ENCODE measurements at regions of chr3 and their contacts with region 1.

Region 1: GRCh38 chr3:156674046-156674910 is at the start of gene TIPARP:
- DNase-seq: peak; percentile 97
- H3K4me3 Mint-ChIP-seq: peak within 1 kb of the TSS; percentile 79
- H3K27ac Mint-ChIP-seq: peak within 1 kb of the TSS; percentile 89
- H3K4me1 Mint-ChIP-seq: peaks cover 20% of the 10 kb centered on the region
- H3K27me3 Mint-ChIP-seq: no peaks in the 10 kb centered on the region
- CTCF ChIP-seq: peak; percentile 40
- total RNA-seq, gene TIPARP: 41.6 and 50.0 TPM in 2 replicates

Region 2: DNA sequence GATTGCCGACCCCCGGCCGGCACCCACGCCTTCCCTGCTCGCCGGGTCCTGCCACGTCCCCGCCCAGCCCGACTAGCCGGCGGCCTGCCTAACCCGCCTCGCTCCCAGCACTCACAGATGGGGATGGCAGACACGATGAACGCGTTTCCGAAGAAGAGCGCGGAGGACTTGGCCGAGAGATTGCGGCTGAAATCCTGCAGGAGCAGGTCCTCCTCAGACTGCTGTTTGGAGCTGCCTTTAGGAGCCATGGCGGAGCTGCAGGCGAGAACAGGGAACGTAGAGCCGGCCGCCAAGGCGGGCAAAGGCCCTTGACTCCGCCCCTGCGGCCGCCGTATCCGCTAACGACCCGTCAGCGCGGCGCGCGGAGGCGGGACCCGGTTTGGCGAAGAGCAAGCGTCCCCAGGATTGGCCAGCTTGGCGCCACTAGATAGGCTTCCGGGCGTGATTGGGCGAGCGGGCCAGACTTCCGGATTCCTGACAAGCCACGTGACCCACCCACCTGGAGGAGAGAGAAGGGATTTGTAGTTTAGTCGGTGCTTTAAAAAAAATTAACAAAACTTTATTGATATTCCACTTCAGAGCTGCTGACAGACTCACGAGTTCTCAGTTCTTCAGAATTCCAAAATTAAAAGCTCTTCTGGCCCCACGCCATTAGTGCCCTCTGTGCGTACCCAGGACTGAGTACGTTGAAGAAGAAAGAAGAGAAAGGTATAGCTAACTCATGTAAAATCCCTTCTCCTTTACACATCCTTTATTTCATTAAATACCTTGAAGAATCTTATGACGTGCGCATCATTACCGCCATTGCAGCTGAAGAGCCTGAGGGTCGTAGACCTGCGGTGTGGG is 119.2 kb before region 1 on chr3 and contains the start of gene SSR3:
- CTCF ChIA-PET with region 1: interaction called, 20 read pairs
- POLR2A ChIA-PET with region 1: interaction called, 157 read pairs
- intact Hi-C with region 1: loop called (anchors 1 kb)
- DNase-seq: peak; percentile 99
- H3K4me3 Mint-ChIP-seq: peak within 1 kb of the TSS; percentile 89
- H3K27ac Mint-ChIP-seq: peak within 1 kb of the TSS; percentile 92
- H3K4me1 Mint-ChIP-seq: peaks cover 30% of the 10 kb centered on the region
- H3K27me3 Mint-ChIP-seq: no peaks in the 10 kb centered on the region
- CTCF ChIP-seq: peak; percentile 8
- total RNA-seq, gene SSR3: 447 and 568 TPM in 2 replicates

Region 3: DNA sequence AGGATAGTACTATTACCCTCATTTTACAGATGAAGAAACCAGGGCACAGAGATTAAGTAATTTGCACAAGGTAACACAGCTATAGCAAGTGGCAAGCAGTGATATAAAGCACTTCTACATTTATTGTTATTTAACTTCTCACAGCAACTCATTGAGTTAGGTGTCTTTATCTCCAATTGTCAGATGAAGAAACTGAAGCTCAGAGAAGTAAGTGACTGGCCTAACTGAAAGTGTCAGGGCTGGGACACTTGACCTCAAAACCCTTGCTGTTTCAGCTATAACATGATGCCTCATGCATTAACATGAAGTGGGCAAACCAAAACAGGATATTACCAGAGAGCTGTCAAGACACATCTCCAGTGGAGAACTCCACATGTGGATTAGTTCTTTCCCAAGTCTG is 86.1 kb after region 1 on chr3:
- CTCF ChIA-PET with region 1: interaction called, 5 read pairs
- POLR2A ChIA-PET with region 1: interaction called, 20 read pairs
- intact Hi-C with region 1: no loop called
- DNase-seq: no peak
- H3K4me3 Mint-ChIP-seq: no peak overlapping the region
- H3K27ac Mint-ChIP-seq: no peak overlapping the region
- H3K4me1 Mint-ChIP-seq: peaks cover 21% of the 10 kb centered on the region
- H3K27me3 Mint-ChIP-seq: no peaks in the 10 kb centered on the region
- CTCF ChIP-seq: no peak

Region 4: DNA sequence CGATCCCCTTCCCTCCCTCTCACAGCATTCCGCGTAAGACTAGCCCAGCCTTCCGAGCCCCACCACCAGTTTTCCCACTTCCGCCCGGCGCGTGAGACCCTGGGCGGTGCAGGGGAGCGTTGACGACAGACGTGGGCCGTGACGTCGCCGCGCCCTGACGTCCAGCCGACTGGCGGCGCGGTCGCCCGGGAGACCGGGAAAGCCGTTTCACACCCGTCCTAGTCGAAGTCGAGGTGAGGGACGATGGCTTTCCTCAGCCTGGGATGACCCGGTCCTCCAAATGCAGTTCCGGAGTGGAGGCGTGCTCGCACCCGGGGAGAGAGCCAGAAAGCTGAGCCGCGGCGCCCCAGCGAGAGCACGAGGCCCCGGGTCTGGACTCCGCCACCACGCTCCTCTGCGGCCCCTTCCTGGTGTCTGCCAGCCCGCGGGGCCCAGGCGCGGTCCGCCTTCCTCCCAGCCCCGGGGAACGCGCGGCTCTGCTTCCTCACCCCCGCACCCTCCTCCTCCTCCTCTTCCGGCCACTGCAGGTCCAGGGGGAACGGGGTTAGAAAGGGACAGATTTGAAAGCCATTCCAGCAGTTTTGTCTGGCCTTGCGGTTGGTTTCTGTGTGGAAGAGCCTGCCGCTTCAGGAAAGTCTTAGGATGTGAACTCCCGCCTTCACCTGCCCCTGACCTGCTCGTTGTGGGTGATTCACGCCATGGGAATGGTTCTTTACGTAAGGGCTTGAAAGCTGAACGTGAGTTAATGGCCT is 152.0 kb after region 1 on chr3 and contains the start of gene LEKR1:
- CTCF ChIA-PET with region 1: interaction called, 3 read pairs
- POLR2A ChIA-PET with region 1: interaction called, 103 read pairs
- intact Hi-C with region 1: loop called (anchors 1 kb)
- DNase-seq: peak; percentile 88
- H3K4me3 Mint-ChIP-seq: peak within 1 kb of the TSS; percentile 94
- H3K27ac Mint-ChIP-seq: peak within 1 kb of the TSS; percentile 98
- H3K4me1 Mint-ChIP-seq: no peaks in the 10 kb centered on the region
- H3K27me3 Mint-ChIP-seq: no peaks in the 10 kb centered on the region
- CTCF ChIP-seq: no peak
- total RNA-seq, gene LEKR1: 1.3 and 2.2 TPM in 2 replicates

Region 5: GRCh38 chr3:157104928-157105652 is 430.8 kb after region 1 on chr3:
- CTCF ChIA-PET with region 1: no interaction called
- POLR2A ChIA-PET with region 1: interaction called, 11 read pairs
- intact Hi-C with region 1: no loop called
- DNase-seq: no peak
- H3K4me3 Mint-ChIP-seq: no peak overlapping the region
- H3K27ac Mint-ChIP-seq: peak overlapping the region; percentile 10
- H3K4me1 Mint-ChIP-seq: peaks cover 18% of the 10 kb centered on the region
- H3K27me3 Mint-ChIP-seq: no peaks in the 10 kb centered on the region
- CTCF ChIP-seq: no peak

Region 6: DNA sequence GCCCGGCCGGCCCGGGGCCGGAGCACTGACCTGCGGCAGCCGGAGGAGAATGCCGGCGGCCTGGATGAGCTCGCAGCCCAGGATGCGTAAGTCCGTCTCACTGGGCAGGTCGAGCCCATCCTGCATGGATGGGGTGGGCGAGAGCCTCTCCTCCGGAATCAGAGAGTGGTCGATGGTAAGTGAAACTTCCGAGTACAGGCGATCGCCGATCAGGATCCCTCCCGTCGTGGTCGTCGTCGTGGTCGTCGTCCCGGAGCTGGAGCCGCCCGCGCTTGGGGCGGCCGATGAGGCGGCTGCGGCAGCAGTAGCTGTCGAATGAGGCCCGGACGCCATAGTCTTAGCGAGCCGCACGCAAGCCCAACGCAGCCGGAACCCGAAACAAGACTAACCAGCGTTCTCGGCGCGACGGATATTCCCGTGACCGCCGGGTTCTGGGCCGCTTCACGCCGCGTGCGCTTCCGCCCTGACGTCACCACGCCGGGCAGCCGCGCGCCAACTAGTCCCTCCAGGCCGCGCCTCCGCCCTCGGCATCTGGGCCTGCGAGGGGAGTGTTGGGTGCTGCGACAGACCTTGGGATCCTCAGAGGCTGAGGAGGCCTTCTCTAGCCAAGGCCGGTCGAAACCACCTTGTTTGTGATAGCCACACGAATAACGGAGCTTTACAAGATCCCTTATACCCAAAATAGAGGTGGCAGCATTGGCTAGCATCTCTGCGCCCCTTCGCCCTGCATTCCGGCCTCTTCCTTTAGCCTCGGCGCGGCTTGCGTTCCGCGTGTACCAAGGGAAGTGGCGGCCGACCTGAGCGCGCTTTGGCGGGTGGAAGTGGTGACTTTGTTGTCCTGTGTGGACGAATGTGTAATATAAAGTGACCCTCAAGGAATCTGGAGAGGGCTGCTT is 485.7 kb after region 1 on chr3 and contains the start of gene CCNL1:
- CTCF ChIA-PET with region 1: no interaction called
- POLR2A ChIA-PET with region 1: interaction called, 56 read pairs
- intact Hi-C with region 1: no loop called
- DNase-seq: peak; percentile 97
- H3K4me3 Mint-ChIP-seq: peak within 1 kb of the TSS; percentile 97
- H3K27ac Mint-ChIP-seq: peak within 1 kb of the TSS; percentile 100
- H3K4me1 Mint-ChIP-seq: peaks cover 19% of the 10 kb centered on the region
- H3K27me3 Mint-ChIP-seq: no peaks in the 10 kb centered on the region
- CTCF ChIP-seq: no peak
- total RNA-seq, gene CCNL1: 103 and 112 TPM in 2 replicates

Measured in MCF 10A (cell line).